Left ventricle myocardium superior (tissue), 1 donor: ENCODE measurements at regions of chr11 and their contacts with region 1.

Region 1: GRCh38 chr11:93732237-93732892 is 8.9 kb downstream of the TAF1D start:
- DNase-seq: no peak
- ATAC-seq: no peak

Region 2: GRCh38 chr11:93765551-93765950 is 33.2 kb after region 1 on chr11:
- intact Hi-C with region 1: loop called (anchors 2 kb)
- DNase-seq: no peak
- ATAC-seq: no peak

Region 3: DNA sequence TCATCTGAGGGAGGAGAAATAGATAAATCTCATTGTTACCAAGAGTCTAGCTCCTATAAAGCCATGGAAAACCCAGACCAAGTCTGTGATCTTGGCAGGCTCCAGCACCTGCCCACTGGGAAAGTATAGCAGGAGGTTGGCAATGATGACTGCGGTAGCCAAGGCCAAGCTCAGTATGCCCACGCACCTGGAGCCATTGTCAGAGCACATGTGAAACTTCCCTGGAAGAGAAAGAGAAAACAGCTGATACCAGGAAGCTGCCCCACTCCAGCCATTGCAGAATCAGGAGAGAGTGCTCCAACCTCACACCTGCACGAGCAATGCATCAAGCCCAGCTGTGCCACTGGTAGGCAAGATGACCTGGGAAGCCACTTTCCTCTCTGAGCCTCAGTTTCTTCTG is 226.6 kb after region 1 on chr11:
- intact Hi-C with region 1: no loop called
- DNase-seq: no peak
- ATAC-seq: no peak

Region 4: GRCh38 chr11:94107363-94107762 is 375.0 kb after region 1 on chr11:
- intact Hi-C with region 1: no loop called
- DNase-seq: no peak
- ATAC-seq: no peak